MCF 10A (cell line): ENCODE measurements at regions of chr15 and their contacts with region 1.

Region 1: DNA sequence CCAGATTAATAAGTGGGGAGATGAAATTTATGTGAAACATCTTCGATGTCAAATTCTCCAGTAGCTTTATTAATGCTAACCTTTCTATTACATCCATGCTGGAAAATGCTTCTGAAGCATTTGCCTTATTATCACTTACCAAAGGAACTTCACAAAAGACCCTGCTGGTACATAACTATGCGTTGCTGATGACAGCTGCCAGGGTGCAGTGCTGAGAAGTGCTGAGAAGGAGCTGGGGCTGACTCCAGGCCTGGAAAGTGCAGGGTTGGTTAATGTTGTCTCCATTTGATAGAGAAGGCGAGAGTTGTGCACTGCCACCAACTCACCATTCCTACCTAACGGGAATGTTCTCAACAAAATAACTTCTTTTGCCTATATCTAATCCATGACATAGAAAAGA is 736.0 kb upstream of the NR2F2 start:
- DNase-seq: no peak
- H3K4me3 Mint-ChIP-seq: no peak overlapping the region
- H3K27ac Mint-ChIP-seq: no peak overlapping the region
- H3K4me1 Mint-ChIP-seq: no peaks in the 10 kb centered on the region
- H3K27me3 Mint-ChIP-seq: no peaks in the 10 kb centered on the region
- CTCF ChIP-seq: no peak

Region 2: GRCh38 chr15:95580130-95580529 is 14.4 kb before region 1 on chr15:
- CTCF ChIA-PET with region 1: no interaction called
- POLR2A ChIA-PET with region 1: no interaction called
- intact Hi-C with region 1: no loop called
- DNase-seq: no peak
- H3K4me3 Mint-ChIP-seq: no peak overlapping the region
- H3K27ac Mint-ChIP-seq: no peak overlapping the region
- H3K4me1 Mint-ChIP-seq: no peaks in the 10 kb centered on the region
- H3K27me3 Mint-ChIP-seq: no peaks in the 10 kb centered on the region
- CTCF ChIP-seq: no peak

Region 3: DNA sequence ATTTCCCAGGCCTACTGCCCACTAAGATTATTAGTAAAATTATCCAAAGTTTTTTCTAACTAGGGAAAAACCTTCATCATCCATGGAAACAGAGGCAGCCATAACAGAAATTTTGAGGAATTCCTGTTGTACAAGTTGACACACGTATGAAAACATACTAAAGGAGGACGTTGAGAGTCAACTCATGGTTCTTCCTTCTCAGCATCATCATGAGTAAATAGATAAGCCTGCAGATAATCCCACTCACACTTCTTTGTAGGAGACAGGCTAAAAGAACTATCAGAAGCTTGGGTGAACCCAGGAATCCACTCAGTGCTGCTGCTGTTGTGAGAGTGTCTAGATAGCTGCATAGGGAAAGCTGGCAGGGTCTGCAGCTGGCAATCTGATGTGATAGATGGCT is 41.2 kb after region 1 on chr15:
- CTCF ChIA-PET with region 1: no interaction called
- POLR2A ChIA-PET with region 1: no interaction called
- intact Hi-C with region 1: loop called (anchors 2 kb)
- DNase-seq: no peak
- H3K4me3 Mint-ChIP-seq: no peak overlapping the region
- H3K27ac Mint-ChIP-seq: no peak overlapping the region
- H3K4me1 Mint-ChIP-seq: no peaks in the 10 kb centered on the region
- H3K27me3 Mint-ChIP-seq: no peaks in the 10 kb centered on the region
- CTCF ChIP-seq: no peak